Vagina (tissue), 2 donors: ENCODE measurements at regions of chr7 and their contacts with region 1.

Region 1: DNA sequence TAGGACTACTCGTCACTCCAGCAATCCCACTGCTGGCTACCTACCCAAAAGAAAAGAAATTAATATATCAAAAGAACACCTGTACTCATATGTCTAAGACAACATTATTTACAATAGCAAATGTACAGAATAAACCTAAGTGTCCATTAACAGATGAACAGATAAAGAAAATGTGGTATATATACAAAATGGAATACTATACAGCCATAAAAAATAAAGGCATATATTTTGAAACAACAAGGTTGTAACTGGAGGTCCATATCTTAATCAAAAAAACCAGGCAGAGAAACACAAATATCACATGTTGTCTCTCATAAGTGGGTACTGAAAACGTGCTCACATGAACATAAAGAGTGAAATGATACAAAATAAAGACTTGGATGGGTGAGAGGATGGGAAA is 1073.3 kb upstream of the PHF14 start:
- DNase-seq: no peak
- H3K4me3 ChIP-seq: no peak overlapping the region
- H3K27ac ChIP-seq: no peak overlapping the region
- H3K4me1 ChIP-seq: no peaks in the 10 kb centered on the region
- H3K27me3 ChIP-seq: no peaks in the 10 kb centered on the region
- CTCF ChIP-seq: no peak
- POLR2A ChIP-seq: no peak

Region 2: GRCh38 chr7:8115547-8116402 is 1784.6 kb before region 1 on chr7:
- intact Hi-C with region 1: no loop called
- DNase-seq: no peak
- H3K4me3 ChIP-seq: no peak overlapping the region
- H3K27ac ChIP-seq: no peak overlapping the region
- H3K4me1 ChIP-seq: no peaks in the 10 kb centered on the region
- H3K27me3 ChIP-seq: no peaks in the 10 kb centered on the region
- CTCF ChIP-seq: no peak
- POLR2A ChIP-seq: no peak

Region 3: DNA sequence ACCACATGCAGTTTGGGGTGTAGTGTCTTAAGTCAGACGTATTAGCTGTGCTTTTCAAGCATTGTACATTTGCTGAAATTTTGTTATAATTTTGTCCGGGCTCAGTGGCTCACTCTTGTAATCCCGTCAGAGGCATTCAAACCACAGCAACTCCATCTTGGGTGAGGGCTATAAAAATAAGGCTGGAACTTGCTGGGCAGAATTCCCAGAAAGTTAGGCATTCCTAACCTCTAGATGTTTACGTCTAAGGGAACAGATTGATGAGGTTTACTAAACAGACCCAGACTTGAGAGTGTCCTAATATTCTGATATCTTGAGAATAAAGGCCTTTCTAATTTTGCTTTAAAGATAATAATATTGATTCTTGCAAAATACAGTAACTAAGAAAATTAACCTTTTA is 509.1 kb before region 1 on chr7:
- intact Hi-C with region 1: loop called (anchors 10 kb)
- DNase-seq: no peak
- H3K4me3 ChIP-seq: no peak overlapping the region
- H3K27ac ChIP-seq: no peak overlapping the region
- H3K4me1 ChIP-seq: no peaks in the 10 kb centered on the region
- H3K27me3 ChIP-seq: no peaks in the 10 kb centered on the region
- CTCF ChIP-seq: no peak
- POLR2A ChIP-seq: no peak

Region 4: GRCh38 chr7:9761224-9761623 is 139.1 kb before region 1 on chr7:
- intact Hi-C with region 1: no loop called
- DNase-seq: no peak
- H3K4me3 ChIP-seq: no peak overlapping the region
- H3K27ac ChIP-seq: no peak overlapping the region
- H3K4me1 ChIP-seq: no peaks in the 10 kb centered on the region
- H3K27me3 ChIP-seq: no peaks in the 10 kb centered on the region
- CTCF ChIP-seq: no peak
- POLR2A ChIP-seq: no peak

Region 5: DNA sequence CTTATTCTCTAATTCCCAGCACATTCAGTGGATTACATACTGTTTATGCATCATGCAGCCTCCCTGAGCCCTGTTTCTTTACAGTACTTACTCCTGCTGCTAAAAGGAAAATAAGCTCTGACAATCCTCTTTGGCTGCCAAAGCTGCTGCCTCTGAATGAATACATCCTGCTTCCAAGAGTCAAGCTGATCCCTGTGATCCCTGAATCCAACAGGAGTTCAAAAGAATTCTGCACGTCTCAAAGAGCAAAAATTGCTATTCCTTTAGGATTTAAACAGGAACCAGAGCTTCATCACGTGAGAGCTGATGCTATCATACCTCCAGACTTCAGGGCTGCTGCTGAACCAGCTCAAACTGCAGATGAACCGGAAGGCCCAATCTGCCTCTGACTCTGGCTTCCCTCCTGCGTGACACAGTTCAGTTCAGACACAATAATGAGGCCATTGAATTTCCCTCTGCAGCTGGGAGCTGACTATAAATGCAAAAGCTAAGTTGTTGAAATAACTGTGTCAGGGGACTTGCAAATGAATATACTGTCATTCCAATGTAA is 222.3 kb after region 1 on chr7:
- intact Hi-C with region 1: no loop called
- DNase-seq: no peak
- H3K4me3 ChIP-seq: no peak overlapping the region
- H3K27ac ChIP-seq: no peak overlapping the region
- H3K4me1 ChIP-seq: no peaks in the 10 kb centered on the region
- H3K27me3 ChIP-seq: no peaks in the 10 kb centered on the region
- CTCF ChIP-seq: no peak
- POLR2A ChIP-seq: no peak